CD8-positive, alpha-beta T cell (primary cell): ENCODE measurements at regions of chr1 and their contacts with region 1.

Region 1: GRCh38 chr1:111139956-111140679 is at the starts of genes CEPT1 and DRAM2:
- DNase-seq: peak; percentile 86 to 96 (median 92)
- ATAC-seq: peak; percentile 74
- H3K4me3 ChIP-seq: peak within 1 kb of the TSS; percentile 89 to 97
- H3K4me3 Mint-ChIP-seq: peak within 1 kb of the TSS; percentile 100
- H3K27ac ChIP-seq: peak within 1 kb of the TSS; percentile 85 to 88
- H3K27ac Mint-ChIP-seq: peak within 1 kb of the TSS; percentile 100
- H3K4me1 ChIP-seq: peaks cover 51% of the 10 kb centered on the region
- H3K4me1 Mint-ChIP-seq: peaks cover 57% of the 10 kb centered on the region
- H3K27me3 ChIP-seq: no peaks in the 10 kb centered on the region
- H3K27me3 Mint-ChIP-seq: no peaks in the 10 kb centered on the region
- CTCF ChIP-seq: no peak
- total RNA-seq, gene CEPT1: 21.5 to 22.9 TPM
- total RNA-seq, gene DRAM2: 25.5 to 27.1 TPM

Region 2: GRCh38 chr1:110734133-110734680 is 405.9 kb before region 1 on chr1:
- CTCF ChIA-PET with region 1: no interaction called
- POLR2A ChIA-PET with region 1: no interaction called
- intact Hi-C with region 1: no loop called
- DNase-seq: no peak
- ATAC-seq: no peak
- H3K4me3 ChIP-seq: no peak overlapping the region
- H3K4me3 Mint-ChIP-seq: no peak overlapping the region
- H3K27ac ChIP-seq: no peak overlapping the region
- H3K27ac Mint-ChIP-seq: no peak overlapping the region
- H3K4me1 ChIP-seq: no peaks in the 10 kb centered on the region
- H3K4me1 Mint-ChIP-seq: no peaks in the 10 kb centered on the region
- H3K27me3 ChIP-seq: no peaks in the 10 kb centered on the region
- H3K27me3 Mint-ChIP-seq: no peaks in the 10 kb centered on the region
- CTCF ChIP-seq: no peak

Region 3: GRCh38 chr1:110872745-110873720 is 267.1 kb before region 1 on chr1 and contains the start of gene CD53:
- CTCF ChIA-PET with region 1: no interaction called
- POLR2A ChIA-PET with region 1: no interaction called
- intact Hi-C with region 1: loop called in 1 of 2 experiments (anchors 10 kb)
- DNase-seq: peak in 8 of 9 experiments; percentile 39 to 92 (median 66)
- ATAC-seq: peak; percentile 70
- H3K4me3 ChIP-seq: peak within 1 kb of the TSS; percentile 83 to 86
- H3K4me3 Mint-ChIP-seq: peak within 1 kb of the TSS; percentile 96
- H3K27ac ChIP-seq: peak within 1 kb of the TSS; percentile 95 to 96
- H3K27ac Mint-ChIP-seq: peak within 1 kb of the TSS; percentile 98
- H3K4me1 ChIP-seq: peaks cover 49% of the 10 kb centered on the region
- H3K4me1 Mint-ChIP-seq: peaks cover 63% of the 10 kb centered on the region
- H3K27me3 ChIP-seq: no peaks in the 10 kb centered on the region
- H3K27me3 Mint-ChIP-seq: no peaks in the 10 kb centered on the region
- CTCF ChIP-seq: no peak
- total RNA-seq, gene CD53: 205 to 213 TPM

Region 4: DNA sequence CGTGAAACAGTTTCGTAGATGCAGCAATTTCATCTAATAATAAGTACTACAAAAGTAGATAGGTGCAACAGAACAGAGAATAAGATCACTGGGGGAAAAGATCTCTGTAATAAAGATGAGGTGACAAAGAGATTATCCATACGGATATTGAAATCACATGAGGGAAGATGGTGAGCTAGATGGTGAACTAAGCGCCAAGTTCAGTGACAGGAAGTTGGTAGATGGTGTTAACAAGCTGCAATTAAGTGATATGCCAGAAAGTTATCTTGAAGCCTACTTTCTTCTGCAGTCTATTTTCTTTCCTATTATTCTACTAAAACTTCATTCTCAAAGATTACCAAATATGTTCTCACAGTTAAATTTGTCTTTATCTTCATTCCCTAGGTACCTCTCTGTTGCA is 183.5 kb before region 1 on chr1:
- CTCF ChIA-PET with region 1: no interaction called
- POLR2A ChIA-PET with region 1: no interaction called
- intact Hi-C with region 1: no loop called
- DNase-seq: no peak
- ATAC-seq: no peak
- H3K4me3 ChIP-seq: no peak overlapping the region
- H3K4me3 Mint-ChIP-seq: no peak overlapping the region
- H3K27ac ChIP-seq: no peak overlapping the region
- H3K27ac Mint-ChIP-seq: no peak overlapping the region
- H3K4me1 ChIP-seq: peaks cover 8% of the 10 kb centered on the region
- H3K4me1 Mint-ChIP-seq: peaks cover 18% of the 10 kb centered on the region
- H3K27me3 ChIP-seq: no peaks in the 10 kb centered on the region
- H3K27me3 Mint-ChIP-seq: no peaks in the 10 kb centered on the region
- CTCF ChIP-seq: no peak

Region 5: GRCh38 chr1:111151838-111152237 is 11.7 kb after region 1 on chr1:
- CTCF ChIA-PET with region 1: no interaction called
- POLR2A ChIA-PET with region 1: interaction called, 4 read pairs
- intact Hi-C with region 1: loop called in 1 of 2 experiments (anchors 1 kb)
- DNase-seq: no peak
- ATAC-seq: no peak
- H3K4me3 ChIP-seq: no peak overlapping the region
- H3K4me3 Mint-ChIP-seq: peak overlapping the region; percentile 51
- H3K27ac ChIP-seq: no peak overlapping the region
- H3K27ac Mint-ChIP-seq: peak overlapping the region; percentile 64
- H3K4me1 ChIP-seq: peaks cover 29% of the 10 kb centered on the region
- H3K4me1 Mint-ChIP-seq: peaks cover 85% of the 10 kb centered on the region
- H3K27me3 ChIP-seq: no peaks in the 10 kb centered on the region
- H3K27me3 Mint-ChIP-seq: no peaks in the 10 kb centered on the region
- CTCF ChIP-seq: no peak

Region 6: GRCh38 chr1:111197598-111198284 is 57.6 kb after region 1 on chr1:
- CTCF ChIA-PET with region 1: interaction called, 8 read pairs
- POLR2A ChIA-PET with region 1: interaction called, 10 read pairs
- intact Hi-C with region 1: loop called in 1 of 2 experiments (anchors 2 kb)
- DNase-seq: peak; percentile 54 to 90 (median 73)
- ATAC-seq: peak; percentile 47
- H3K4me3 ChIP-seq: peak overlapping the region; percentile 74 to 93
- H3K4me3 Mint-ChIP-seq: peak overlapping the region; percentile 94
- H3K27ac ChIP-seq: peak overlapping the region; percentile 55 to 84
- H3K27ac Mint-ChIP-seq: peak overlapping the region; percentile 97
- H3K4me1 ChIP-seq: peaks cover 62% of the 10 kb centered on the region
- H3K4me1 Mint-ChIP-seq: peaks cover 75% of the 10 kb centered on the region
- H3K27me3 ChIP-seq: no peaks in the 10 kb centered on the region
- H3K27me3 Mint-ChIP-seq: no peaks in the 10 kb centered on the region
- CTCF ChIP-seq: no peak

Region 7: GRCh38 chr1:111334169-111334568 is 194.1 kb after region 1 on chr1:
- CTCF ChIA-PET with region 1: no interaction called
- POLR2A ChIA-PET with region 1: interaction called, 4 read pairs
- intact Hi-C with region 1: loop called in 1 of 2 experiments (anchors 5 kb)
- DNase-seq: peak; percentile 19 to 82 (median 57)
- ATAC-seq: peak; percentile 87
- H3K4me3 ChIP-seq: no peak overlapping the region
- H3K4me3 Mint-ChIP-seq: no peak overlapping the region
- H3K27ac ChIP-seq: no peak overlapping the region
- H3K27ac Mint-ChIP-seq: no peak overlapping the region
- H3K4me1 ChIP-seq: no peaks in the 10 kb centered on the region
- H3K4me1 Mint-ChIP-seq: peaks cover 6% of the 10 kb centered on the region
- H3K27me3 ChIP-seq: no peaks in the 10 kb centered on the region
- H3K27me3 Mint-ChIP-seq: no peaks in the 10 kb centered on the region
- CTCF ChIP-seq: peak; percentile 73

Region 8: GRCh38 chr1:111448918-111449702 is 309.0 kb after region 1 on chr1 and contains the starts of genes ATP5PB and WDR77:
- CTCF ChIA-PET with region 1: no interaction called
- POLR2A ChIA-PET with region 1: no interaction called
- intact Hi-C with region 1: loop called (anchors 1 to 2 kb)
- DNase-seq: peak; percentile 75 to 98 (median 89)
- ATAC-seq: peak; percentile 94
- H3K4me3 ChIP-seq: peak within 1 kb of the TSS; percentile 77 to 86
- H3K4me3 Mint-ChIP-seq: peak within 1 kb of the TSS; percentile 99
- H3K27ac ChIP-seq: peak within 1 kb of the TSS; percentile 75 to 83
- H3K27ac Mint-ChIP-seq: peak within 1 kb of the TSS; percentile 98
- H3K4me1 ChIP-seq: peaks cover 58% of the 10 kb centered on the region
- H3K4me1 Mint-ChIP-seq: peaks cover 84% of the 10 kb centered on the region
- H3K27me3 ChIP-seq: no peaks in the 10 kb centered on the region
- H3K27me3 Mint-ChIP-seq: no peaks in the 10 kb centered on the region
- CTCF ChIP-seq: no peak
- total RNA-seq, gene ATP5PB: 59.9 to 64.6 TPM
- total RNA-seq, gene WDR77: 9.5 to 11.4 TPM